B cell (primary cell): ENCODE measurements at regions of chr4 and their contacts with region 1.

Region 1: DNA sequence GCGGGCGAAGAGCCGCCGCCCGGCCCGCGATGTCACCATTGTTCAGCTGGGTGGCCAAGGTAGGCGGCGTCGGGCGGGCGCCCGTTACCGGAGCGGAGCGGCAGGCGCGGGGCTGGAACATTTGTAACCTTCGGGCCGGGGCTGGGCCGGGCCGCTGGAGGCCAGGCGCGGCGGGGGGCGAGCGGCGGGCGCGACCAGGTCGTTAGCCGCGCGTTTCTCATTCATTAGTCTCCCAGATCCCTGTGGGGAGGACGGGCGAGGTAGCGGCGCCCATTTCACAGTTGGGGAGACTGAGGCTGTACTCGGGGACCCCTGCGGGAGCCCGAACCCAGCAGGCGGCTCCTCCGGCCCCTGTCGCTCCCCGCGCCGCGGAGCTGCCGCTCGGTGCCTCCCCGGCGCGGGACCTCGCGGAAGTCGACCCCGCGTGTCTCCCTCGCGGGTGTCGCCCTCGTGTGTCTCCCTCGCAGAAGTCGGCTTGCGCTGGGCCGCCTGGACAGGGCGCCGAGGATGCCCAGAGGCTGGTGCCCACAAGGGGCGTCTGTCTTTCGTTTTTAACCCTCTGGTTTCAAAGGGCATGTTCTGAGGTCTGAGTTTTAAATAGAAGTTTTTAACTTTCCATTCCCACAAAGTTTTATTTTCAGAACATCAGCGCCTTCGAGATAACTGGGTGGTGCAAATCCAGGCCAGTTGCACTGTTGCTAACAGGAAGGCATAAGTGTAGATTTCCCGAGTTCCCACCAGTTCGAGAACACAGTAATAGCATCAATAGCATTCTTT is 17.5 kb downstream of the PTTG2 start:
- DNase-seq: peak; percentile 86
- ATAC-seq: peak; percentile 74
- H3K4me3 ChIP-seq: peak overlapping the region; percentile 40 to 91 (median 64)
- H3K4me3 Mint-ChIP-seq: peak overlapping the region; percentile 91
- H3K27ac ChIP-seq: peak overlapping the region; percentile 75 to 93
- H3K27ac Mint-ChIP-seq: peak overlapping the region; percentile 93
- H3K4me1 ChIP-seq: peaks cover 45% of the 10 kb centered on the region in 2 donors
- H3K4me1 Mint-ChIP-seq: peaks cover 51% of the 10 kb centered on the region
- H3K27me3 ChIP-seq: no peaks in the 10 kb centered on the region
- H3K27me3 Mint-ChIP-seq: no peaks in the 10 kb centered on the region
- CTCF ChIP-seq: peak; percentile 78

Region 2: DNA sequence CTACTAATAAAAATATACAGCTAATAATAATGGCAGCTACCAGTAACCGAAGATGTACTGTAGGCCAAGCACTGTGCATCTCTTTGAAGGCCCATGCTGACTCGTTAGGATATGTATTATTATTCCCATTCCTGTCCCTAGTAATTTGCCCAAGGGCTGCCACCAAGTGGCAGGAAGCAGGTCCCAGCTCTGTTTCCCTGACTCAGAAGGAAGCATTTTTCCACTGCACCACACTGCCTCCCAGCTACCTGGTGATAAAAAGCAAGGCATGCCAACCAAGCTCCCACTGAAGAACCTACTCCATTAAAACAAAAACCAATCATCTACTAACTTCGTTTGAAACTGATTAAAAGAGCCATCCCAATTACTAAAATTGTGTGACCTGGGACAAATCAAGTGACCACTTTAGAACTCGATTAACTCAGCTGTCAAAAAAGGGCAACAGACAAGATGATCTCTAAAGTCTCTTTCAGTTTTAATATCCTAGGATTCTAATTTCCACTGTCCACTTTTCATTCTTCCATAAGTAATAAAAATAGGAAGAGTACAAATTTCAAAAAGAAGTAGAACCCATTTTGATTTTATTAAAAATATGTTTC is 175.5 kb before region 1 on chr4:
- CTCF ChIA-PET with region 1: interaction called, 38 read pairs
- POLR2A ChIA-PET with region 1: no interaction called
- intact Hi-C with region 1: loop called (anchors 1 kb)
- DNase-seq: no peak
- ATAC-seq: no peak
- H3K4me3 ChIP-seq: no peak overlapping the region
- H3K4me3 Mint-ChIP-seq: no peak overlapping the region
- H3K27ac ChIP-seq: no peak overlapping the region
- H3K27ac Mint-ChIP-seq: no peak overlapping the region
- H3K4me1 ChIP-seq: no peaks in the 10 kb centered on the region
- H3K4me1 Mint-ChIP-seq: peaks cover 3% of the 10 kb centered on the region
- H3K27me3 ChIP-seq: no peaks in the 10 kb centered on the region
- H3K27me3 Mint-ChIP-seq: peaks cover 6% of the 10 kb centered on the region
- CTCF ChIP-seq: no peak

Region 3: GRCh38 chr4:37852376-37852775 is 125.3 kb before region 1 on chr4:
- CTCF ChIA-PET with region 1: interaction called, 14 read pairs
- POLR2A ChIA-PET with region 1: no interaction called
- intact Hi-C with region 1: no loop called
- DNase-seq: no peak
- ATAC-seq: no peak
- H3K4me3 ChIP-seq: no peak overlapping the region
- H3K4me3 Mint-ChIP-seq: no peak overlapping the region
- H3K27ac ChIP-seq: no peak overlapping the region
- H3K27ac Mint-ChIP-seq: no peak overlapping the region
- H3K4me1 ChIP-seq: peaks cover 6 to 10% of the 10 kb centered on the region in 2 donors
- H3K4me1 Mint-ChIP-seq: peaks cover 8% of the 10 kb centered on the region
- H3K27me3 ChIP-seq: no peaks in the 10 kb centered on the region
- H3K27me3 Mint-ChIP-seq: no peaks in the 10 kb centered on the region
- CTCF ChIP-seq: no peak

Region 4: DNA sequence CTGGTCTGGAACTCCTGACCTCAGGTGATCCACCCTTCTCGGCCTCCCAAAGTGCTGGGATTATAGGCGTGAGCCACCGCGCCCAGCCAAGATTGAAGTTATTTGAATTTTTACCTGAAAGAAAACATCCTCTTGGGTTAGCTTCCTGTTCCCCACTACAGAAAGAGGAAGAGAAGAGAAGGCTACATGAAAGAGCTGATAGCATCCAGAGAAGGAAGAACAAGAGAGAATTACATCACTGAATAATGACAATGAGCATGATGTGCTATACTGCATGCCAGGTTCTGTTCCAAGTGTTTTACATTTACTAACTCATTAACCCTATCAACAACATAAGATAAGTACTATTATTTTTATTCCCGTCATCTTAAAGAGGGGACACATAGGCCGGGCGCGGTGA is 98.3 kb before region 1 on chr4:
- CTCF ChIA-PET with region 1: no interaction called
- POLR2A ChIA-PET with region 1: no interaction called
- intact Hi-C with region 1: no loop called
- DNase-seq: peak; percentile 35
- ATAC-seq: no peak
- H3K4me3 ChIP-seq: no peak overlapping the region
- H3K4me3 Mint-ChIP-seq: no peak overlapping the region
- H3K27ac ChIP-seq: peak overlapping the region in 1 of 2 donors; percentile 26
- H3K27ac Mint-ChIP-seq: peak overlapping the region; percentile 0
- H3K4me1 ChIP-seq: peaks cover 9 to 14% of the 10 kb centered on the region in 2 donors
- H3K4me1 Mint-ChIP-seq: peaks cover 10% of the 10 kb centered on the region
- H3K27me3 ChIP-seq: no peaks in the 10 kb centered on the region
- H3K27me3 Mint-ChIP-seq: no peaks in the 10 kb centered on the region
- CTCF ChIP-seq: no peak

Region 5: DNA sequence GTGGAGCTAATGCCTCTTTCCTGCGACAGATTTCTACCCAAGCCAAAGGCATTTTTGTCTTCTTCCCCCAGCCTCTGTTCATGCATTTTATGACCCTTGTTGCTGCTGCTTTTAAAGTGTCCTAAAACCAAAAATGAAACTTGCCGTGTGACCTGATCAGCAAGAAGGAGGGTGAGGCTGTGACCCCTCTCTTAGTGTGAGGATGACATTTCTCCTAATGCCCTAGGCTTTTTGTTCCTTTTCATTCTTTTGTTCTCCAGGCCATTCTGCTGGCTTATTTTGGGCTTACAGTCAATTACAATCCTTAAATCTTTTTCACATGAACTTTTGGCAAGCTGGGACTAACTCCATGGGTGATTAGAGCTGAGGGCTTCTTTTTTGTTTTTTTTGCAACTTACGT is 16.9 kb after region 1 on chr4:
- CTCF ChIA-PET with region 1: interaction called, 12 read pairs
- POLR2A ChIA-PET with region 1: no interaction called
- intact Hi-C with region 1: loop called (anchors 1 kb)
- DNase-seq: peak; percentile 25
- ATAC-seq: no peak
- H3K4me3 ChIP-seq: no peak overlapping the region
- H3K4me3 Mint-ChIP-seq: peak overlapping the region; percentile 62
- H3K27ac ChIP-seq: peak overlapping the region; percentile 28 to 43
- H3K27ac Mint-ChIP-seq: peak overlapping the region; percentile 54
- H3K4me1 ChIP-seq: peaks cover 45 to 50% of the 10 kb centered on the region in 2 donors
- H3K4me1 Mint-ChIP-seq: peaks cover 63% of the 10 kb centered on the region
- H3K27me3 ChIP-seq: no peaks in the 10 kb centered on the region
- H3K27me3 Mint-ChIP-seq: no peaks in the 10 kb centered on the region
- CTCF ChIP-seq: no peak

Region 6: DNA sequence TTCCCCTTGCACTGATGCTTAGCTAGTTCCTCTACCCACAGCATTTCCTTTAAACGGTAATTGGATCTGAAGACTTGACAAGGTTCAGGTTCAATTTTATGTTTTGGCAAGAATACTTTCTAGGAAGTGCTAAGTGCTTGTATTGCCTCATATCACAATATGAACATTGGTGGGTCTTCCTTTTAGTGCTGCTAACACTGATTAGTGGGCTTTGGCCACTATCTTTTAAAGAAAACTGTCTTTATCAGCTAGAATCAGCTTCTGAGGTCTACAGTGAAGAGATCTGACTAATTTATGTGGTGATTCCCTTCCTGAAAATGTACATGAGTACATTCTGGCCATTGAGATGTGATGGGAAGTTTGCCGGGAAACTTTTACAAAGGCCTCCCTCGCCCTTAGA is 369.6 kb after region 1 on chr4:
- CTCF ChIA-PET with region 1: no interaction called
- POLR2A ChIA-PET with region 1: no interaction called
- intact Hi-C with region 1: no loop called
- DNase-seq: no peak
- ATAC-seq: no peak
- H3K4me3 ChIP-seq: no peak overlapping the region
- H3K4me3 Mint-ChIP-seq: no peak overlapping the region
- H3K27ac ChIP-seq: no peak overlapping the region
- H3K27ac Mint-ChIP-seq: no peak overlapping the region
- H3K4me1 ChIP-seq: no peaks in the 10 kb centered on the region
- H3K4me1 Mint-ChIP-seq: no peaks in the 10 kb centered on the region
- H3K27me3 ChIP-seq: peaks cover 0 to 7% (median 0%) of the 10 kb centered on the region in 4 experiments
- H3K27me3 Mint-ChIP-seq: peaks cover 8% of the 10 kb centered on the region
- CTCF ChIP-seq: no peak

Region 7: GRCh38 chr4:38641811-38642210 is 664.2 kb after region 1 on chr4:
- CTCF ChIA-PET with region 1: no interaction called
- POLR2A ChIA-PET with region 1: no interaction called
- intact Hi-C with region 1: no loop called
- DNase-seq: no peak
- ATAC-seq: no peak
- H3K4me3 ChIP-seq: no peak overlapping the region
- H3K4me3 Mint-ChIP-seq: no peak overlapping the region
- H3K27ac ChIP-seq: no peak overlapping the region
- H3K27ac Mint-ChIP-seq: no peak overlapping the region
- H3K4me1 ChIP-seq: no peaks in the 10 kb centered on the region
- H3K4me1 Mint-ChIP-seq: peaks cover 2% of the 10 kb centered on the region
- H3K27me3 ChIP-seq: peaks cover 0 to 4% (median 0%) of the 10 kb centered on the region in 4 experiments
- H3K27me3 Mint-ChIP-seq: peaks cover 25% of the 10 kb centered on the region
- CTCF ChIP-seq: no peak

Region 8: GRCh38 chr4:38856524-38857337 is 879.1 kb after region 1 on chr4 and contains the start of gene TLR6:
- CTCF ChIA-PET with region 1: no interaction called
- POLR2A ChIA-PET with region 1: no interaction called
- intact Hi-C with region 1: loop called (anchors 10 kb)
- DNase-seq: peak; percentile 87
- ATAC-seq: peak; percentile 56
- H3K4me3 ChIP-seq: peak within 1 kb of the TSS; percentile 51 to 78 (median 70)
- H3K4me3 Mint-ChIP-seq: peak within 1 kb of the TSS; percentile 93
- H3K27ac ChIP-seq: peak within 1 kb of the TSS; percentile 73 to 77
- H3K27ac Mint-ChIP-seq: peak within 1 kb of the TSS; percentile 94
- H3K4me1 ChIP-seq: peaks cover 39 to 43% of the 10 kb centered on the region in 2 donors
- H3K4me1 Mint-ChIP-seq: peaks cover 52% of the 10 kb centered on the region
- H3K27me3 ChIP-seq: no peaks in the 10 kb centered on the region
- H3K27me3 Mint-ChIP-seq: no peaks in the 10 kb centered on the region
- CTCF ChIP-seq: peak; percentile 87
- total RNA-seq, gene TLR6: 54.4 and 60.6 TPM in 2 replicates